Activated CD4-positive, alpha-beta memory T cell treated with anti-CD3 and anti-CD28 coated beads, Interleukin-2, amount 10 ng/mL, durations not matched to agents 7 days and 5 days (primary cell): ENCODE measurements at regions of chr14 and their contacts with region 1.

Region 1: DNA sequence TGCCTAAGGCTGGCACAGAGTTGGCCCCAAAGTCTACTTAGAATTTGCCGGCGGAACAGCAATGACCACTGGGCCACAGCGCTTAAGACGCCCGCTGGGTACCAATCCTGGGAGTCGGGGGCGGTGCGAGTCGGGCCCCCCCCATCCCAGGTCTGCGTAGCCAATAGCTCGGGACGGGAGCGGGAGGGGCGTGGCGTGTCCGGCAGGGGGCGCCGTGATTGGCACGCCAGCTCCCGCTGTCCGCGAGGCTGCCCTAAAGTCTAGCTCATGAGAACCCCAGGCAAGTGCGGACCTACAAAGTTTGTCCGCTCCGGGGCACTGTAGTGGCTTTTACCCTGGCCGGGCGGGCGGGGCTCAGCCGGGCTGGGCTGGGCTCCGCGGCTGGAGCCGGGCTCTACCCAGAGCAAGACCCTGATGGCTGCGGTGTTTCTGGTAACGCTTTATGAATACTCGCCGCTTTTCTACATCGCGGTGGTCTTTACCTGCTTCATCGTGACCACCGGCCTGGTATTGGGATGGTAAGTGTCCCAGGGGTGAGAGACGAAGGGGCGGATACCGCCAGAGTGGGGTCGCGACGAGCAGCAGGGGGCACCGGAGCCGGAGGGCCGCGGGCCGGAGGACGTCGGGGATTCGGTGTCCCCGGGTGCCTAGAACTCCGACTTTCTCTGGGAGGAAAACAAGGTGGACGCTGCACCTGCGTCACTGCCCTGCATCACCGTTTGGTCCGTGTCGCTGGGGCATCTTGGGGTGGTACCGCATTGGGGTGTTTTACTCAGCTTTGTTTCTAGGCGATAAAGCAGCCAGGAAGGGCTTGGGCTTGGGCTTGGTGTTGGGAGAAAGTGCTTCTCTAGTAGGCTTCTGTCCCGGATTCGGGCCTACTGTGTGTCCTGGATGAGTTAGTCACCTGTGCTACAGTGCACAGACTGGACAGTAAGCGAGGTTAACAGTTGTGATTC is at the start of gene CGRRF1:
- DNase-seq: peak; percentile 97
- H3K4me3 Mint-ChIP-seq: peak within 1 kb of the TSS; percentile 93
- H3K27ac Mint-ChIP-seq: peak within 1 kb of the TSS; percentile 74
- H3K4me1 Mint-ChIP-seq: peaks cover 30% of the 10 kb centered on the region
- H3K27me3 Mint-ChIP-seq: peaks cover 1% of the 10 kb centered on the region
- total RNA-seq, gene CGRRF1: 13.3 to 14.0 TPM

Region 2: DNA sequence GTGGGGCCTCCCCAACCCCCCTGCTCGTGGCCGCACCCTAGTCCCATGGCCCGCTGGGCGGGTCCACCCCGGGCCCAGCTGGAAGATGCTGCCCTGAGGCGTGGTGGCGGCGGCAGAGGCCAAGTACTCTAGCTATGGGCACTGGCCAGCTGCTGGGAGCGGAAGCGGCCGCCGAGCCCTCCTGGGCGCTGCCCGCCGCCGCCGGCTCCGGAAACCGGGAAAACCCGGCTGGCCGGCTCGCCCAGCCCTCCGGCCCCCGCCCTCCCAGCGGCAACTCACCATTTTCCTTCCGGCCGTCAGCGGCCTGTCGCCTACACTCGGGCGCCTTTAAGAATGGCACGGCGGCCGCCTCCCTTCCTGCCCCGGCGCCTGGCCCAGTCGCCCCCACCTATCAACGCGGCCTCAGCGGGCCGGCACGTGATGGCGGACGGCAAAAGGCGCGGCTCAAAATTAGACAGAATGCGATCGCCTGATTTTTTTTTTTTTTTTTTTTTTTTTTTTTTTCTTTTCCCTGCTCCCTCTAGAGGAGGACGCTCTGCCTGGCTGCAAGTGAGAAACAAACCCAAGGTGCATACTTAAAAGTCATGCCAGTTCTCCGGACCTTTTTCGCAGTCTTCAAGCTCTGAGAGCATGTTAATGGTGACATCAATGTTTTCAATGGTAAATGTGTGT is 21.0 kb before region 1 on chr14 and contains the start of gene GMFB:
- CTCF ChIA-PET with region 1: interaction called, 35 read pairs
- POLR2A ChIA-PET with region 1: interaction called, 31 read pairs
- DNase-seq: peak; percentile 92
- H3K4me3 Mint-ChIP-seq: peak within 1 kb of the TSS; percentile 85
- H3K27ac Mint-ChIP-seq: peak within 1 kb of the TSS; percentile 86
- H3K4me1 Mint-ChIP-seq: peaks cover 58% of the 10 kb centered on the region
- H3K27me3 Mint-ChIP-seq: no peaks in the 10 kb centered on the region
- total RNA-seq, gene GMFB: 35.1 to 37.1 TPM

Region 3: DNA sequence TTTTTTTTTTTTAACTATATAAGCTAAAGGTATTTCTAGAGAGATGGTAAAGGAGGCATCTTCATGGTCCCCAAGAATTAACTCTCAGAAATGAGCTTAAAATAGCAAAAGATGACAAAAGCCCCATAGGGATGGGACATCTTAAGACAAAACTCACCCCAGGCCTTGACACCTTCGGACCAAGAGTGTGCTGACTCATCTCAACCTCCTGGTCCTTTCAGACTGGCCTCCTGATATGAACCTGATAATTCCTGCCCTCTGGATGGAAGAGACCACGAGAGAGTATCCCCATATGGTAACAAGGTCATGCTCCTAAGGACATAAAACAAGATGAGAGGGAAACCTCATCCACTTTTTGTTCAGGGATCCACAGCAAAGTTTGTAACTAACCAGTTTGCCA is 12.6 kb before region 1 on chr14:
- CTCF ChIA-PET with region 1: interaction called, 11 read pairs
- POLR2A ChIA-PET with region 1: no interaction called
- DNase-seq: no peak
- H3K4me3 Mint-ChIP-seq: no peak overlapping the region
- H3K27ac Mint-ChIP-seq: no peak overlapping the region
- H3K4me1 Mint-ChIP-seq: no peaks in the 10 kb centered on the region
- H3K27me3 Mint-ChIP-seq: peaks cover 22% of the 10 kb centered on the region

Region 4: GRCh38 chr14:54572316-54572715 is 62.5 kb after region 1 on chr14:
- CTCF ChIA-PET with region 1: no interaction called
- POLR2A ChIA-PET with region 1: no interaction called
- DNase-seq: no peak
- H3K4me3 Mint-ChIP-seq: no peak overlapping the region
- H3K27ac Mint-ChIP-seq: no peak overlapping the region
- H3K4me1 Mint-ChIP-seq: peaks cover 8% of the 10 kb centered on the region
- H3K27me3 Mint-ChIP-seq: peaks cover 31% of the 10 kb centered on the region

Region 5: DNA sequence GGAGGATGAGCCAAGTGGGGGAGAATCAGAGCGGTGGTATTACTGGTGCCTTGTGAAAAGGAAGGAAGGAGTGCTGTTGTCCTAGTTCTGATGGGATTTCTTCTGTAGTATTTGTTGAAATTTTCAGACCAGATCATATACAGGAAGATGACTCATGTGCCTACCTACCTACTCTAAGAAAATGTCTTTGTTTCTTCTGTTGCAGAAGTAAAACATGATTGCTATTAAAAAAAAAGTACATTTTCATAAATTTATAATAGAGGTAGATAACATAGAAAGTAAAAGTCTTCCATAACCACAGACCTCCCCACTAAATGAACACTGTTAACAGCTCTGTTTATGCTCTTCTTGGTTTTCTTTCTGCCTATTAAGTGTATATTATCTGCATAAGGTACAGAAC is 84.0 kb after region 1 on chr14:
- CTCF ChIA-PET with region 1: no interaction called
- POLR2A ChIA-PET with region 1: no interaction called
- DNase-seq: no peak
- H3K4me3 Mint-ChIP-seq: no peak overlapping the region
- H3K27ac Mint-ChIP-seq: no peak overlapping the region
- H3K4me1 Mint-ChIP-seq: peaks cover 12% of the 10 kb centered on the region
- H3K27me3 Mint-ChIP-seq: peaks cover 20% of the 10 kb centered on the region